ENCODE measurements at regions of chr19 and their contacts with region 1.

Region 1: GRCh38 chr19:47104680-47105079 is 8.9 kb downstream of the ZC3H4 start:
- DNase-seq: no peak
- ATAC-seq: no peak
- H3K4me3 Mint-ChIP-seq: no peak overlapping the region
- H3K27ac Mint-ChIP-seq: no peak overlapping the region
- H3K4me1 Mint-ChIP-seq: peaks cover 71% of the 10 kb centered on the region
- H3K27me3 Mint-ChIP-seq: no peaks in the 10 kb centered on the region

Region 2: DNA sequence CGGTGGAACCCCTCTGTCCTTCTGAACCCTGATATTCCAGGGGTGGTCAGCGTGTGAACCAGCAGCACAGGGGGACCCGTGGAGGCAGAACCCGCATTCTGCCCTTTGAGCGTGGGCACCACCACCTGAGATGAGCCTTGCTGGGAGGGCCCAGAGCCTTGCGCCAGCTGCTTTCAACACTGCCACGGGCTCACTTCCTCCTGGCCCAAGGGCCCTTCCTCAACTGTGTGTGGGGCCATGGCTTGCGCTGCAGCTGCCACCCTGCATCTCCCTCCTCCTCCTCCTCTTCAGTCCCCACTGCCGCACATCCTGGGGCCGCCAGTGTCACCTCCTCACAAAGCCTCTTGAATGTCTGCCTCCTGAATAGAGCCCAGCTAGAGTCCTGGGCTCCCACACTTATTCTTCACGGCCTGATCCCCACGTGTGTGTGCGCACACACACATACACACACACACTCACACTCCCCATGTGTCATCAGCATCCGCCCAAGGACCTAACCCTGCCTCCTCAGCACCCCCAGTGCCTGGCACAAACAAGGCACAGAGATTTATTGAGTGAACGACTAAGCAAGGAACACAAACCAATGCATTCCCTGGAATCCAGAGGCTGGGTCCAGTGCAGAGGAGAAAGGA is 29.4 kb before region 1 on chr19:
- CTCF ChIA-PET with region 1: interaction called, 10 read pairs
- DNase-seq: no peak
- ATAC-seq: no peak
- H3K4me3 Mint-ChIP-seq: no peak overlapping the region
- H3K27ac Mint-ChIP-seq: peak overlapping the region; percentile 3
- H3K4me1 Mint-ChIP-seq: peaks cover 4% of the 10 kb centered on the region
- H3K27me3 Mint-ChIP-seq: no peaks in the 10 kb centered on the region

Measured in activated CD8-positive, alpha-beta memory T cell treated with anti-CD3 and anti-CD28 coated beads, Interleukin-2, amount 10 ng/mL, durations not matched to agents 7 days and 5 days (primary cell).